Naive thymus-derived CD4-positive, alpha-beta T cell (primary cell): ENCODE measurements at regions of chr20 and their contacts with region 1.

Region 1: GRCh38 chr20:36199345-36200257 is 36.7 kb upstream of the AAR2 start:
- DNase-seq: peak; percentile 31 to 74 (median 57)
- ATAC-seq: peak; percentile 83
- H3K4me3 ChIP-seq: no peak overlapping the region
- H3K4me3 Mint-ChIP-seq: no peak overlapping the region
- H3K27ac ChIP-seq: no peak overlapping the region
- H3K27ac Mint-ChIP-seq: no peak overlapping the region
- H3K4me1 ChIP-seq: peaks cover 0 to 5% of the 10 kb centered on the region in 2 donors
- H3K4me1 Mint-ChIP-seq: peaks cover 3 to 6% (median 5%) of the 10 kb centered on the region in 7 donors
- H3K27me3 ChIP-seq: no peaks in the 10 kb centered on the region
- H3K27me3 Mint-ChIP-seq: peaks cover 9 to 21% (median 12%) of the 10 kb centered on the region in 5 donors

Region 2: GRCh38 chr20:36154700-36155628 is 44.6 kb before region 1 on chr20 and contains the start of gene EPB41L1:
- CTCF ChIA-PET with region 1: no interaction called
- POLR2A ChIA-PET with region 1: no interaction called
- intact Hi-C with region 1: loop called (anchors 1 to 5 kb)
- DNase-seq: peak in 4 of 9 donors; percentile 6 to 23 (median 14)
- ATAC-seq: peak; percentile 45
- H3K4me3 ChIP-seq: peak within 1 kb of the TSS; percentile 35
- H3K4me3 Mint-ChIP-seq: peak within 1 kb of the TSS; percentile 29 to 81 (median 58)
- H3K27ac ChIP-seq: no peak within 1 kb of the TSS
- H3K27ac Mint-ChIP-seq: no peak within 1 kb of the TSS
- H3K4me1 ChIP-seq: no peaks in the 10 kb centered on the region
- H3K4me1 Mint-ChIP-seq: peaks cover 0 to 8% (median 4%) of the 10 kb centered on the region in 7 donors
- H3K27me3 ChIP-seq: peaks cover 0 to 9% of the 10 kb centered on the region in 2 donors
- H3K27me3 Mint-ChIP-seq: peaks cover 9 to 40% (median 25%) of the 10 kb centered on the region in 5 donors
- total RNA-seq, gene EPB41L1: 0.05 to 0.81 (median 0.74) TPM in 4 of 5 experiments, not detected in the other

Region 3: DNA sequence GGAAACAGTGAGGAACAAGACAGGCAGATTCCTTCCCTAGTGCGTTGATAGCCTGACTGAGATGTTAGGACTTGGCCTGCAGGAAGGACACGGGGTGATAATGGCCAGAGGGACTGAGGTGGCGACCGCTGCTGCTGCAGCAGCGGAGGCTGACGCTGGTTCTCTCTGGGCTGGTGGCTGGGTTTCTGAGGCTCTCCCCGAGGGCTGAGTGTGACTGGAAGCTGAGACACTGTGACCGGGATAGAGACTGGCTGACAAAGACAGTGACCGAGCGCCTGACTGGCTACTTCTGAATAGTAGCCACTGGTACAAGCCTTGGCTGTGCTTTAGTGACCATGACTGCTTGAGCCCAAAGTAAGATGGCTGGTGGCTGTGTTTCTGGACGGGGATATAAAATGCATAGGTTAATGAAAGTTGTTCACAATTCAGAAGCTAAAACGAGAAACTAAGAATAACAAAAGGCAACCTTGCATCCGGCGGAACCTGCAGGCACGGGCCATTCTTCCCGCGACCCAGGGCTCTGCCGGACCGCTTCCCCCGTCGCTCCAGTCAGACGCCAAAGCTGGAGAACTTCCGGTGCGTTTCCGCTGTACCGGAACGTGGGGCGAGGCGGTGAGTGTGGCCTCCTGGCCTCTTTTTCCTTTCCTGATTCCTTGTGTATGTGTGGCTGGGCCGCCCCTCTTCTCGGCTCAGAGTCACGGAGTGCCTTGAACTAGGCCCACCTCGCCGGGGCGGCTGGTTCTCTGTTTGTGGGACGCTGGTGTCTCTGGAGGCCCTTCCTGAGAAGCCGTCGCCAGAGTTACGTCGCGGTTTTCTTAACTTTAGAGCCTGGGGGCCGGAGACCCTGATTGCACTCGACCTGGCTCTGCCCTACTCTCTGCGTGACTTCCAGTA is 36.5 kb after region 1 on chr20 and contains the start of gene AAR2:
- CTCF ChIA-PET with region 1: interaction called, 4 read pairs
- POLR2A ChIA-PET with region 1: no interaction called
- intact Hi-C with region 1: loop called in 1 of 2 experiments (anchors 1 kb)
- DNase-seq: peak; percentile 63 to 80 (median 77)
- ATAC-seq: peak; percentile 96
- H3K4me3 ChIP-seq: peak within 1 kb of the TSS; percentile 77
- H3K4me3 Mint-ChIP-seq: peak within 1 kb of the TSS; percentile 86 to 98 (median 94)
- H3K27ac ChIP-seq: peak within 1 kb of the TSS; percentile 80
- H3K27ac Mint-ChIP-seq: peak within 1 kb of the TSS; percentile 91 to 98 (median 94)
- H3K4me1 ChIP-seq: peaks cover 4 to 22% of the 10 kb centered on the region in 2 donors
- H3K4me1 Mint-ChIP-seq: peaks cover 26 to 55% (median 37%) of the 10 kb centered on the region in 7 donors
- H3K27me3 ChIP-seq: no peaks in the 10 kb centered on the region
- H3K27me3 Mint-ChIP-seq: peaks cover 0 to 6% (median 0%) of the 10 kb centered on the region in 5 donors
- total RNA-seq, gene AAR2: 18.2 to 25.9 (median 23.7) TPM

Region 4: DNA sequence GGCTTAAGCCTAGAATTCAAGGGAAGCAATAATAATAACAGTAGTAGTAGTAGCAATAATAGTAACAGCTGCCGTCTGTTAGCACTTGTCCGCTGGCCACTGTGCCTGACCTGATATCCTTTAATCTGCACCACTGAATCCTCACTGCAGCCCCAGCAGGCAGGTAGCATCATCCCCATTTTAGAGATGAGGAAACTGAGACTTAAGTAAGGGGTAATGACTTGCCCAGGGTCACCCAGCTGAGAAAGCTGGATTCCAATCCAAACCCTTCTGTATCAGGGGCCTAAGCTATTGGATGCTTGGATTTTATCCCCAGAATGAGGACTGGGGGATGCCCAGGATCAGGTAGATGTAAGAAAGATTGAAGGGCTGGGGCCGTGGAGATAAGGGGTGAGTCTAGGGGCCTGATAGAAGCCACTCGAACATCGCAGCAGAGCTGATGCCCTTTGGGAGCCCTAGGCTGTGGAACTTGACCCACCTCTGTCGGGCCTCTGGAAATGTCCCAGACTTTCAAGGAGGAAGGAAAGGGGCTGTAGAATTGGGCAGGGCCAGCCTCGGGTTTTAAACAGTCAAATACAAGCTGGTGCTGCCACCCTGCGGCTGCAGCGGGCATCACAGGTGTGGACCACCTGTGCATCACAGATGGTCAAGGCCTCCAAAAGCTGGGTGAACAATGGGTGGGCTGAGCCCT is 239.6 kb after region 1 on chr20:
- CTCF ChIA-PET with region 1: interaction called, 24 read pairs
- POLR2A ChIA-PET with region 1: no interaction called
- intact Hi-C with region 1: loop called (anchors 1 kb)
- DNase-seq: peak in 8 of 9 donors; percentile 41 to 73 (median 50)
- ATAC-seq: peak; percentile 51
- H3K4me3 ChIP-seq: no peak overlapping the region
- H3K4me3 Mint-ChIP-seq: no peak overlapping the region
- H3K27ac ChIP-seq: no peak overlapping the region
- H3K27ac Mint-ChIP-seq: no peak overlapping the region
- H3K4me1 ChIP-seq: no peaks in the 10 kb centered on the region
- H3K4me1 Mint-ChIP-seq: peaks cover 0 to 8% (median 4%) of the 10 kb centered on the region in 7 donors
- H3K27me3 ChIP-seq: no peaks in the 10 kb centered on the region
- H3K27me3 Mint-ChIP-seq: peaks cover 0 to 15% (median 5%) of the 10 kb centered on the region in 5 donors

Region 5: GRCh38 chr20:36493013-36493800 is 293.6 kb after region 1 on chr20:
- CTCF ChIA-PET with region 1: interaction called, 6 read pairs
- POLR2A ChIA-PET with region 1: no interaction called
- intact Hi-C with region 1: loop called (anchors 1 to 2 kb)
- DNase-seq: no peak
- ATAC-seq: no peak
- H3K4me3 ChIP-seq: no peak overlapping the region
- H3K4me3 Mint-ChIP-seq: peak overlapping the region in 3 of 10 donors; percentile 1 to 77 (median 63)
- H3K27ac ChIP-seq: peak overlapping the region; percentile 68
- H3K27ac Mint-ChIP-seq: peak overlapping the region in 4 of 9 donors; percentile 27 to 92 (median 86)
- H3K4me1 ChIP-seq: peaks cover 23 to 24% of the 10 kb centered on the region in 2 donors
- H3K4me1 Mint-ChIP-seq: peaks cover 30 to 54% (median 46%) of the 10 kb centered on the region in 7 donors
- H3K27me3 ChIP-seq: no peaks in the 10 kb centered on the region
- H3K27me3 Mint-ChIP-seq: no peaks in the 10 kb centered on the region

Region 6: DNA sequence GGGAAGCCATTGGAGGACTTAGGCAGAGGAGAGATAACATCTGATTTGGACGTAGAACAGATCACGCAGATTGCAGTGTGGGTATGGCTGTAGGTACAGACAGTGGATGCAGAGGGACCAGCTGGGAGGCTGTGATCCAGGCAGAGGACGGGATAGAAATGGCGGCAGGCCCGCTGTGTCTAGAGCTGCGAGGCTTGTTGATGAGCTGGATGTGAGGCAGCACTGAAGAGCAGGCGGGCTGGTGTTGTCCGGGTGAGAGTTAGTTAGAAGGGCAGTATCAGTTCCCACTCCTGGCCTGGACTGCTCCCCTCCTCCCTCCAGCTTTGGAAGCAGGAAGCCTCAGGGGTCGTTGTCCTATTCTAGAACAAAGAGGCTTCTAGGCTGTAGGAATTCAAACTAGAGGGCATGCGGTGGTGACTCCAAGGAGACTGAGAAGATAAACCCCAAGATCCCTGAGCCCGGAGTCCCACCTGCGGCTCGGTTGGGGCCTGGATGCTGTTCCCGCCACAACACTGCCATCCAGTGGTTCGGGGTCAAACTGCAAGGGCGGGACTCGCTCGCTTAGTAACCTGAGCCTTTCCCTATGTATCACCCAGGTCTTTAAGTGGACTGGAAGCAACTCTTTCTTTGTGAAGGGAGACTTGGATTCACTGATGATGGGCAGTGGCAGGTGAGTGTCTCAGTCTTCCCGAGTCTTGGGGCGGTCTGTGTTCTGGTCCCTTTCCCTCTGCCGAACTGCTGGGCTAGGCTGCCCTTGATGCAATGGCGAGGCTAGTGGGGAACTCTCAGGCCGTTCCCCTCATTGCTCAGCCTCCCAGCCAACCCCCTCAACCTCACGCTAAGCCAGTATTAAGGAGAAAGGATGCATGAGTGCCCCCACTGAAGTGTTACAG is 687.5 kb after region 1 on chr20:
- CTCF ChIA-PET with region 1: no interaction called
- POLR2A ChIA-PET with region 1: no interaction called
- intact Hi-C with region 1: loop called in 1 of 2 experiments (anchors 2 kb)
- DNase-seq: peak; percentile 59 to 84 (median 75)
- ATAC-seq: peak; percentile 94
- H3K4me3 ChIP-seq: no peak overlapping the region
- H3K4me3 Mint-ChIP-seq: peak overlapping the region in 7 of 10 donors; percentile 10 to 62 (median 36)
- H3K27ac ChIP-seq: peak overlapping the region; percentile 33
- H3K27ac Mint-ChIP-seq: peak overlapping the region; percentile 2 to 89 (median 73)
- H3K4me1 ChIP-seq: peaks cover 5 to 7% of the 10 kb centered on the region in 2 donors
- H3K4me1 Mint-ChIP-seq: peaks cover 4 to 22% (median 16%) of the 10 kb centered on the region in 7 donors
- H3K27me3 ChIP-seq: no peaks in the 10 kb centered on the region
- H3K27me3 Mint-ChIP-seq: no peaks in the 10 kb centered on the region